Activated naive CD4-positive, alpha-beta T cell treated with anti-CD3 and anti-CD28 coated beads for 36 hours (primary cell): ENCODE measurements at regions of chr2 and their contacts with region 1.

Region 1: DNA sequence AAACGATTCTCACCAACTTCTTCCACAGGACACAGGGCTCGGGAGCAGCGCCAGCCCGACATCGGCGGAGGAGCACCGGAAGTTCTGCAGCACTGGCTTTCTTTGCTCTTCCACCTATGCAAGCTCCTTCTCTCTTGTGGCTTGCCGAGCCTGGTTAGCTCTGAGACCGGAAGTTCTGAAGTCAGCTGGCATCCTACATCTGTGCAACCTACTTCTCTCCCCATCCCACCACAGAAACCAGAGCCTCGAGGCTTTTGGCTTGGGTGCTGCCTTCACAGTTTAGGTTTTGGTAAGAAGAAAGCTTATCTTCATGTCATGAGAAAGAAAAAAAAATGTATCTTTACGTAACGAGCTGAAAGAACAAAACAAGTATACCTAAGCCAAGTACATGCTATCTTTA is 111.7 kb downstream of the ANKRD44 start:
- DNase-seq: peak; percentile 93
- H3K4me3 Mint-ChIP-seq: peak overlapping the region; percentile 83
- H3K27ac Mint-ChIP-seq: peak overlapping the region; percentile 96
- H3K4me1 Mint-ChIP-seq: peaks cover 86% of the 10 kb centered on the region
- H3K27me3 Mint-ChIP-seq: no peaks in the 10 kb centered on the region

Region 2: DNA sequence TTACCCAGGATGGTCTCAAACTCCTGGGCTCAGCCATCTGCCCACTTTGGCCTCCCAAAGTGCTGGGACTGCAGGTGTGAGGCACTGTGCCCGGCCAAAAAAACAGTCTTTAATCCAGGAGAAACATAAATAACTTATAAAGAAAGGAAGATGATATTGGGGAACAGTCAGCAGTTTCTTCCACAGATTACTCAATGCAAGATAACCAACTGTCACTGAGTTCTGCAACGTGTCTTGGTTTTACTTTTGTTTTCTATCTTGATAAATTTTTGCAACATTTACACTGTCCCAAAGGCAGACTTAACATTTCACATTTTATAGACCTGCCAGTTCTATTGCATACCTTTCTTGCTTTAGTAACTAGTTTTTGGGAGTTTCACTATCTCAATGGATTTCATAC is 40.5 kb after region 1 on chr2:
- CTCF ChIA-PET with region 1: interaction called, 6 read pairs
- intact Hi-C with region 1: loop called (anchors 1 kb)
- DNase-seq: no peak
- H3K4me3 Mint-ChIP-seq: peak overlapping the region; percentile 78
- H3K27ac Mint-ChIP-seq: peak overlapping the region; percentile 91
- H3K4me1 Mint-ChIP-seq: peaks cover 85% of the 10 kb centered on the region
- H3K27me3 Mint-ChIP-seq: no peaks in the 10 kb centered on the region